Natural killer cell (primary cell): ENCODE measurements at regions of chr17 and their contacts with region 1.

Region 1: DNA sequence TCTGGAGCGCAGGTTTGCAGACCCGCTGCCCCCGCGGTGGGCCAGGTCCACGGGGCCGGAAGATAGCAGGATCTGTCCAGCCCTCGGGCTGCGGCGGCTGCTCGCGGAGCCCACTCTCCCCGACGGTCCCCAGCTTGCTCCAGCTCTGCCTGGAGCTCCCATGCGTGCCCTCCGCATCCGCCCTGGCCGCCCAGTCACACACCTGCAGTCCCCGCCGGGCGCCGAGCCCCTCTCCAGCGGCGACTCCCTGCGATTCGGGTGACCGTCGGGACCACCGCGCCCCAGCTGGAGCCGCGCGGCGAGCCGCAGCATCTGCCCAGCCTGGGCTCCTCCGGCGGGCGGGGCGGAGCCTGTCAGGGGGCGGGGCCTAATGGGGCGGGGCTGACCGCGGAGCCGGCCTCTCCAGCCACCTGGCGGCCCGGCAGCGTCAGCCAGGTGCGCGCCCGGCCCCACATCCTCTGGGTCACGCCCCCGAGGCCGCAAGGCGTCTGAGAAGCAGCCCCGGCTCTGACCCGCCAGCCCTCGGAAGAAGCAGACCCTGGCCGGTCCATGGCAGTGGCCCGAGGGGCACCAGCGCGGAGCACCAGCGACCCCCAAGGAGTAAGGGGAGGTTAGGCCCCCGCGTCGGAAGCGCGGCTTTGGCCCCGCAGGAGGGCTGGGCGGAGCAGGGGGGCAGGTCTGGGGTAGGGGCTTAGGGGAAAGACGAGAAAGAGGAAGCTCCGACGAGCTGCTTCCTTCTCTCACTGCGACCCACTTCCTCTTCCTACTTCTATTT is at the start of gene PIK3R5:
- DNase-seq: peak; percentile 71 to 88
- ATAC-seq: peak; percentile 60 to 85 (median 72)
- H3K4me3 ChIP-seq: peak within 1 kb of the TSS; percentile 91
- H3K4me3 Mint-ChIP-seq: peak within 1 kb of the TSS; percentile 96
- H3K27ac ChIP-seq: peak within 1 kb of the TSS; percentile 87
- H3K27ac Mint-ChIP-seq: peak within 1 kb of the TSS in 1 of 2 donors; percentile 89
- H3K4me1 ChIP-seq: peaks cover 50% of the 10 kb centered on the region
- H3K4me1 Mint-ChIP-seq: peaks cover 40 to 60% of the 10 kb centered on the region in 2 donors
- H3K27me3 ChIP-seq: no peaks in the 10 kb centered on the region
- H3K27me3 Mint-ChIP-seq: no peaks in the 10 kb centered on the region
- CTCF ChIP-seq: no peak
- total RNA-seq, gene PIK3R5: 254 to 364 (median 348) TPM

Region 2: DNA sequence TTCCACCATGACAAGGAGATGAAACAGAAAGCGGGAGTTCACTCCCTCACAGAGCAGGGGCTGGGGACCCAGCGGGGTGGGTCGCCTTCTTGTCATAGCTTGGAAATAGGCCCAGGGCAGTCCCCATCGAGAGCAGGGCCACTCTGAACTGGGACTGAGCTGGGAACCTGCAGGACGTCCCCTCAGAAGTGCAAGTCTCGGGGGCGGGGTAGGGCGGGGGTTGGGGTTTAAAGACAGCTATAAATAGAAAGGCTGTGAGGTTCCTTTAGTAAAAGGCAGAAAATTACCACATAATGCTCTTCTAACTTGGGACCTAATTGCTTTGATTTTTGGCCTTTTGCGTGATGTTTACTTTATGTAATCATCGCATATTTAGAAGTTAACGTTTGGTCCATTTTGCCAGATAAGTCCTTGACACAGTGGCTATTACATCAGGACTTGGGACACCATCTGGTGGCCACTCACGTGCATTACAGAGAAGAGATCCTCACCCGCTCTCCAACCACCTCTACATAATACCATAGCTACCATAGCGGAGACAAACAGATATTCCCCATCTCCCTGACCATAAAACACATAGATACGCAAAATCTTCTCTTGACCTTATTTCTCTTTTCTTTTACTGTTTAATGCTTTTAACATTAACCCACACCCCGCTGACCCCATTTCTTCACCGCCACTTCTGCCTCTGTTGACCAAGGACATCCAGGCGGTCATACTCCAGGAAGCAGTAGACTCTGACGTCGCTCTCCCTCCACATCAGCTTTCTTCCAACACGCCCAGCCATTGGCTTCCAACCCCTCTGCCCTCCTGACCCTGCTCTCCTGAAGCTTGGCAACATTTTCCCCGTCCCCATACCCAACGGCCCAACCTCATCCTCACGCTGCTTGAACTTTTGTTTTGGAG is 70.7 kb before region 1 on chr17:
- intact Hi-C with region 1: loop called (anchors 2 kb)
- DNase-seq: peak in 1 of 2 donors; percentile 81
- ATAC-seq: peak; percentile 35 to 57 (median 56)
- H3K4me3 ChIP-seq: no peak overlapping the region
- H3K4me3 Mint-ChIP-seq: no peak overlapping the region
- H3K27ac ChIP-seq: no peak overlapping the region
- H3K27ac Mint-ChIP-seq: peak overlapping the region; percentile 80 to 94
- H3K4me1 ChIP-seq: peaks cover 51% of the 10 kb centered on the region
- H3K4me1 Mint-ChIP-seq: peaks cover 56 to 63% of the 10 kb centered on the region in 2 donors
- H3K27me3 ChIP-seq: no peaks in the 10 kb centered on the region
- H3K27me3 Mint-ChIP-seq: no peaks in the 10 kb centered on the region
- CTCF ChIP-seq: peak; percentile 67

Region 3: GRCh38 chr17:8924595-8924994 is 41.0 kb before region 1 on chr17:
- intact Hi-C with region 1: loop called (anchors 5 kb)
- DNase-seq: no peak
- ATAC-seq: peak; percentile 19 to 40 (median 40)
- H3K4me3 ChIP-seq: no peak overlapping the region
- H3K4me3 Mint-ChIP-seq: no peak overlapping the region
- H3K27ac ChIP-seq: peak overlapping the region; percentile 39
- H3K27ac Mint-ChIP-seq: no peak overlapping the region
- H3K4me1 ChIP-seq: peaks cover 44% of the 10 kb centered on the region
- H3K4me1 Mint-ChIP-seq: peaks cover 27 to 43% of the 10 kb centered on the region in 2 donors
- H3K27me3 ChIP-seq: no peaks in the 10 kb centered on the region
- H3K27me3 Mint-ChIP-seq: no peaks in the 10 kb centered on the region
- CTCF ChIP-seq: no peak

Region 4: GRCh38 chr17:8954339-8954738 is 11.2 kb before region 1 on chr17:
- intact Hi-C with region 1: loop called (anchors 2 kb)
- DNase-seq: peak; percentile 79 to 95
- ATAC-seq: peak; percentile 77 to 95 (median 87)
- H3K4me3 ChIP-seq: no peak overlapping the region
- H3K4me3 Mint-ChIP-seq: peak overlapping the region; percentile 93
- H3K27ac ChIP-seq: peak overlapping the region; percentile 81
- H3K27ac Mint-ChIP-seq: peak overlapping the region in 1 of 2 donors; percentile 89
- H3K4me1 ChIP-seq: peaks cover 76% of the 10 kb centered on the region
- H3K4me1 Mint-ChIP-seq: peaks cover 96 to 98% of the 10 kb centered on the region in 2 donors
- H3K27me3 ChIP-seq: no peaks in the 10 kb centered on the region
- H3K27me3 Mint-ChIP-seq: no peaks in the 10 kb centered on the region
- CTCF ChIP-seq: no peak

Region 5: GRCh38 chr17:9021158-9021991 is 55.8 kb after region 1 on chr17 and contains the start of gene NTN1:
- intact Hi-C with region 1: loop called (anchors 10 kb)
- DNase-seq: peak; percentile 58 to 76
- ATAC-seq: peak; percentile 85 to 90 (median 87)
- H3K4me3 ChIP-seq: peak within 1 kb of the TSS; percentile 39
- H3K4me3 Mint-ChIP-seq: peak within 1 kb of the TSS; percentile 88
- H3K27ac ChIP-seq: no peak within 1 kb of the TSS
- H3K27ac Mint-ChIP-seq: no peak within 1 kb of the TSS
- H3K4me1 ChIP-seq: peaks cover 21% of the 10 kb centered on the region
- H3K4me1 Mint-ChIP-seq: peaks cover 4 to 6% of the 10 kb centered on the region in 2 donors
- H3K27me3 ChIP-seq: peaks cover 29% of the 10 kb centered on the region
- H3K27me3 Mint-ChIP-seq: peaks cover 38 to 53% of the 10 kb centered on the region in 2 donors
- CTCF ChIP-seq: no peak
- total RNA-seq, gene NTN1: 0.12 to 0.15 (median 0.14) TPM